CD8-positive, alpha-beta T cell (primary cell): ENCODE measurements at regions of chr21 and their contacts with region 1.

Region 1: GRCh38 chr21:17903029-17903806 is 84.1 kb upstream of the C21orf91 start:
- DNase-seq: peak in 2 of 9 experiments; percentile 57 to 66
- ATAC-seq: peak; percentile 56
- H3K4me3 ChIP-seq: no peak overlapping the region
- H3K4me3 Mint-ChIP-seq: no peak overlapping the region
- H3K27ac ChIP-seq: no peak overlapping the region
- H3K27ac Mint-ChIP-seq: no peak overlapping the region
- H3K4me1 ChIP-seq: no peaks in the 10 kb centered on the region
- H3K4me1 Mint-ChIP-seq: peaks cover 4% of the 10 kb centered on the region
- H3K27me3 ChIP-seq: no peaks in the 10 kb centered on the region
- H3K27me3 Mint-ChIP-seq: no peaks in the 10 kb centered on the region
- CTCF ChIP-seq: peak; percentile 60

Region 2: DNA sequence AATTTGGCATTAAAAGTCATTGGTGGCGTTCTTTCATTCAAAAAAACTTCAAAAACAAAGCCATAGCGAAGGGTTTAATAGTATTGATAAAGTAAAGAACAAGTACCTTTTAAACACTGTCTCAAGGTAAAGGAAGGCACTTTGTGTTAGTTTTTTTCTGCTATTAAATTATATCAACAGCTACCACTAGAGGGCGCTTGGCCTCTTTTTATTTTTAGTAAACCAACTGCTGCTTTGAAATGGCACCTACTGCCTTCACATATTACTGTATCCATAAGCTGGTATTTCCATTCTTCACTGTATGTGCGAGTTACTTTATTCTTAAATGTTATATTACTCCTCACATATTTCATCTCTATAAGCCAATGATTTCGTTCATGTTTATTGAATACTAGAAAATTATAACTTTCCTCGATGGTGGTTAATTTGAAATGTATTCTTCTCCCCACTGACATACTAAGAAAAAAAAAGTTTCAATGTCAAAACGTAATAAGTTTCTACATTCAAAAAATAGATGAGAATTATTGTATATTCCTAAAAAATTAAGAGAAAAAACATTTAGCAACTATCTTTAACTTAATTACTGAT is 516.1 kb before region 1 on chr21:
- CTCF ChIA-PET with region 1: interaction called, 4 read pairs
- POLR2A ChIA-PET with region 1: no interaction called
- intact Hi-C with region 1: loop called in 1 of 2 experiments (anchors 5 kb)
- DNase-seq: peak in 6 of 9 experiments; percentile 18 to 65 (median 52)
- ATAC-seq: peak; percentile 55
- H3K4me3 ChIP-seq: no peak overlapping the region
- H3K4me3 Mint-ChIP-seq: no peak overlapping the region
- H3K27ac ChIP-seq: no peak overlapping the region
- H3K27ac Mint-ChIP-seq: no peak overlapping the region
- H3K4me1 ChIP-seq: no peaks in the 10 kb centered on the region
- H3K4me1 Mint-ChIP-seq: no peaks in the 10 kb centered on the region
- H3K27me3 ChIP-seq: no peaks in the 10 kb centered on the region
- H3K27me3 Mint-ChIP-seq: peaks cover 4% of the 10 kb centered on the region
- CTCF ChIP-seq: peak; percentile 94

Region 3: GRCh38 chr21:17679002-17679600 is 224.1 kb before region 1 on chr21:
- CTCF ChIA-PET with region 1: interaction called, 64 read pairs
- POLR2A ChIA-PET with region 1: no interaction called
- intact Hi-C with region 1: loop called (anchors 1 kb)
- DNase-seq: peak in 3 of 9 experiments; percentile 13 to 80 (median 75)
- ATAC-seq: peak; percentile 96
- H3K4me3 ChIP-seq: no peak overlapping the region
- H3K4me3 Mint-ChIP-seq: no peak overlapping the region
- H3K27ac ChIP-seq: no peak overlapping the region
- H3K27ac Mint-ChIP-seq: no peak overlapping the region
- H3K4me1 ChIP-seq: no peaks in the 10 kb centered on the region
- H3K4me1 Mint-ChIP-seq: no peaks in the 10 kb centered on the region
- H3K27me3 ChIP-seq: no peaks in the 10 kb centered on the region
- H3K27me3 Mint-ChIP-seq: no peaks in the 10 kb centered on the region
- CTCF ChIP-seq: peak; percentile 92

Region 4: GRCh38 chr21:18661842-18662241 is 758.6 kb after region 1 on chr21:
- CTCF ChIA-PET with region 1: no interaction called
- POLR2A ChIA-PET with region 1: no interaction called
- intact Hi-C with region 1: no loop called
- DNase-seq: no peak
- ATAC-seq: no peak
- H3K4me3 ChIP-seq: no peak overlapping the region
- H3K4me3 Mint-ChIP-seq: no peak overlapping the region
- H3K27ac ChIP-seq: no peak overlapping the region
- H3K27ac Mint-ChIP-seq: no peak overlapping the region
- H3K4me1 ChIP-seq: no peaks in the 10 kb centered on the region
- H3K4me1 Mint-ChIP-seq: no peaks in the 10 kb centered on the region
- H3K27me3 ChIP-seq: no peaks in the 10 kb centered on the region
- H3K27me3 Mint-ChIP-seq: no peaks in the 10 kb centered on the region
- CTCF ChIP-seq: no peak